ENCODE measurements at regions of chr7 and their contacts with region 1.

Region 1: DNA sequence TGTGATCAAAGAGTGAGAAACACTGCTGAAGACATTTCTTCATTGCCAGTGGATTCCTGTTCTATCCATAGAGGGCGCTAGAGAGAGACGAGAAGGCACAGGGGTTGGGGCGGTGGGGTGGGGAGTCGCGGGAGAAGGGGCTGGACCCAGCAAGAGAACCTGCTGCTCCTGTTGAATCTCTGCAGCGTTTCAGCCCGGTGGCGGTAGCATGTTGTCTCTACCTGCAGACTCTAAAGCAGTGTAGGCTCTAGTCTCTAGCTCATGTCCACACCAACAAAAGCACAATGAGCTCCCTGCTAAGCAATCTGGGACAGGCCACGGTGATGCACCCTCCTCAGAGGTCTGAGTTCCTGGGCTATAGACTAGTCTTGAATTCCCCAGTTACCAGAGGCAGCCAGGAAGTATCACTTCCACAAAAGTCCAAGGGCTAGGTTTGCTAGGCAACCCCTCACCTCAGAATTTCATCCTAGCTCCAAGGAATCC is 167.7 kb downstream of the DGKB start:
- DNase-seq: no peak
- H3K4me3 ChIP-seq: no peak overlapping the region
- H3K27ac ChIP-seq: no peak overlapping the region
- H3K4me1 ChIP-seq: no peaks in the 10 kb centered on the region
- H3K27me3 ChIP-seq: no peaks in the 10 kb centered on the region

Region 2: GRCh38 chr7:16044645-16045044 is 1309.8 kb after region 1 on chr7:
- in situ Hi-C with region 1: no loop called
- DNase-seq: no peak
- H3K4me3 ChIP-seq: no peak overlapping the region
- H3K27ac ChIP-seq: no peak overlapping the region
- H3K4me1 ChIP-seq: peaks cover 8% of the 10 kb centered on the region; the same call in 1 of the 2 replicates
- H3K27me3 ChIP-seq: peaks cover 3% of the 10 kb centered on the region

Region 3: GRCh38 chr7:16071246-16071857 is 1336.5 kb after region 1 on chr7:
- in situ Hi-C with region 1: loop called (anchors 25 kb)
- DNase-seq: peak; percentile 77
- H3K4me3 ChIP-seq: no peak overlapping the region
- H3K27ac ChIP-seq: no peak overlapping the region
- H3K4me1 ChIP-seq: 0 out of 2 replicates have a peak, but pooled peaks cover 8% of the 10 kb centered on the region
- H3K27me3 ChIP-seq: 0 out of 2 replicates have a peak, but pooled peaks cover 5% of the 10 kb centered on the region